Sigmoid colon (tissue), 7 donors: ENCODE measurements at regions of chr17 and their contacts with region 1.

Region 1: DNA sequence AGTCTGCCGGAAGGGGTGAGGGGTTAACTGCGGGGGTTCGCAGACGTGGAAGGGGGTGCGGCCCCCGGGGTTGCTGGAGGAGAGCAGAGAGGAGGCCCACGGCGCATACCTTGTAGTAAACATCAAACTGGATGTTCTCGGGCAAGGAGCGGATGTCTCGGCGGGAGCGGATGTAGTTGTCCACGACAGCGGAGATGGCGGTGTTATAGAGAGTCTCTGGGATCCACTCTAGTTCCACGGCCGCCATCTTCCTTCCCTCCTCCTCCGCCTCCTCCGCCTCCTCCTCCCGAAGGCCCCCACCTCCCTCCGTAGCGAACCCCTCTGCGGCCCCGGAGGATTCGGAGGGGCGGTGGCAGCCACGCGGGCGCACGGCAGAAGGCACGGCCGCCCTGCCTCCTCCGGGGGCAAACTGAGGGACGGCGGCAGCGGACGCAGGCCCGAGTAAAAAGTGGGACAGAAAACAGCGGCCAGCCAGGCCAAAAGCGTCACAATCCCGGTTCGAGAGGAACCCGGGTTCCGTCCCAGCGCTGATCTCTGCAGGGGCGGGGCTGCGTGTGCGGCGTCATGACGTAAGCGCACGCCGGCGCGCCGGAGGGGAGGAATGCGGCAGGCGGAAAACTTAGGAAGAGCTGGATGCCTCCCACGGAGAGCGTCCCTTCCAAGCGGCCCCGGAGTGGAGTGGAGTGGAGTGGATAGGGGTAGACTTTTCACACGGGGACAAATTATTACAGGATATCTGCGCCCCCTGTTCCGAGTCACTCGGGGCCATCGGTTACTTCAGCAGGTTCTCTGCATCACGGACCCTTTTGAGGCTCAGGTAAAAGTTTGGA is at the start of gene APPBP2:
- DNase-seq: peak; percentile 94
- H3K4me3 ChIP-seq: peak within 1 kb of the TSS; percentile 79 to 90 (median 82)
- H3K27ac ChIP-seq: peak within 1 kb of the TSS; percentile 98 to 99 (median 98)
- H3K4me1 ChIP-seq: peaks cover 0 to 45% (median 40%) of the 10 kb centered on the region in 4 donors
- H3K27me3 ChIP-seq: no peaks in the 10 kb centered on the region
- CTCF ChIP-seq: no peak
- EP300 ChIP-seq: no peak
- POLR2A ChIP-seq: peak; percentile 73 to 84
- total RNA-seq, gene APPBP2: 26.2 to 36.0 (median 33.8) TPM

Region 2: DNA sequence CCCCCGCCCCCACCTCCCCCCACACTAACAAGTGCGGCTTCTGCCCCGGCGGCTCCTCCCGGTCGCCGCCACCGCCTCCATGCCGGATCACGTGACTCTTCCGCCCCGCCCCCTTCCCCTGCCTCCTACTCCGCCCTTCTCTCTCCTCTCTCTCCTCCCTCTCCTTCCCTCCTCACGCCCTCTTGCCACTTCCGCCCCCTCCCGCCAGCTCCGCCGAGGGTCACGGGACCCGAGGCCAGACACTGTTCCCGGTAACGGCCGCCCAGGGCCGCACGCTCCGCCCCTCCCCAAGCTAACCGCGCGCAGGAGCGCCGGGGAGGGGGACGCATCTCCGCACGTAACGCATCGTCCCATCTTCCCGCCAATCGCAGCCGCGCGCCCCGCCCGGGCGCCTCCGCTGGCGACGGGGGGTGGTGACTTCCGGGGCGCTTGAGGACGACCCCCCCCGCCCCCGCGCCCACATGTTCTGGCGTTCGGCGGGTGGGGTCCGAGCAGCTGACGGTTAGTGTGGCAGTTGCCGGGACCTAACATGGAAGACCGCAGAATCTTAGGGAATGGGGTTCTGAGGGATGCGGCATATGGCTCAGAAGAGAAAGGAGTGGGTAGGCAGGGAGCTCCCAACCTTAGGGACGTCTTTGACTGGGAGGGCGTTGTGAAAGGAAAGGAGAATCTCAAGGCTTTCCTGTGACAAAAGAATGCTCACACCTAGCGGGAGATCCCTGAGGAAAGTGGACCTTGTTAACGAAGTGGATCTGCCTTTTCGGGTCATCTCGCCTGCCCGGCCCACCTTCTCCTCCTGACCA is 133.7 kb before region 1 on chr17 and contains the start of gene USP32:
- intact Hi-C with region 1: loop called (anchors 1 kb)
- DNase-seq: peak; percentile 99
- H3K4me3 ChIP-seq: peak within 1 kb of the TSS; percentile 72 to 93 (median 79)
- H3K27ac ChIP-seq: peak within 1 kb of the TSS; percentile 94 to 98 (median 95)
- H3K4me1 ChIP-seq: peaks cover 0 to 40% (median 34%) of the 10 kb centered on the region in 4 donors
- H3K27me3 ChIP-seq: no peaks in the 10 kb centered on the region
- CTCF ChIP-seq: peak in 2 of 4 experiments; percentile 15 to 18
- EP300 ChIP-seq: peak in 3 of 4 donors; percentile 36 to 91 (median 82)
- POLR2A ChIP-seq: peak; percentile 41 to 67
- total RNA-seq, gene USP32: 39.6 to 50.9 (median 44.1) TPM

Region 3: DNA sequence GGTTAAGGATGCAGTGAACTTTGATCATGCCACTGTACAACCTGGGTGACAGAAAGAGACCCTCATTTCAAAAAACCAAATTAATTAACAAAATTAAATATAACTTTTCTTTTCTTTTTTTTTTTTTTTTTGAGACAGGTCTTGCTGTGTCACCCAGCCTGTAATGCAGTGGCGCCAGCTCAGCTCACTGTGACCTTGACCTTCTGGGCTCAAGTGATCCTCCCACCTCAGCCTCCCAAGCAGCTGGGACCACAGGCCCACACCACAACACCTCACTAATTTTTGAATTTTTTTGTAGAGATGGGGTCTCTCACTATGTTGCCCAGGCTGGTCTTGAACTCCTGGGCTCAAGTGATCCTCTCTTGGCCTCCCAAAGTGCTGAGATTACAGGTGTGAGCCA is 42.7 kb after region 1 on chr17:
- intact Hi-C with region 1: loop called (anchors 2 kb)
- DNase-seq: no peak
- H3K4me3 ChIP-seq: no peak overlapping the region
- H3K27ac ChIP-seq: no peak overlapping the region
- H3K4me1 ChIP-seq: peaks cover 0 to 12% (median 7%) of the 10 kb centered on the region in 4 donors
- H3K27me3 ChIP-seq: no peaks in the 10 kb centered on the region
- CTCF ChIP-seq: no peak
- EP300 ChIP-seq: no peak
- POLR2A ChIP-seq: no peak

Region 4: GRCh38 chr17:60627124-60627523 is 101.2 kb after region 1 on chr17:
- intact Hi-C with region 1: no loop called
- DNase-seq: no peak
- H3K4me3 ChIP-seq: no peak overlapping the region
- H3K27ac ChIP-seq: no peak overlapping the region
- H3K4me1 ChIP-seq: peaks cover 0 to 4% (median 0%) of the 10 kb centered on the region in 4 donors
- H3K27me3 ChIP-seq: no peaks in the 10 kb centered on the region
- CTCF ChIP-seq: no peak
- EP300 ChIP-seq: no peak
- POLR2A ChIP-seq: no peak

Region 5: DNA sequence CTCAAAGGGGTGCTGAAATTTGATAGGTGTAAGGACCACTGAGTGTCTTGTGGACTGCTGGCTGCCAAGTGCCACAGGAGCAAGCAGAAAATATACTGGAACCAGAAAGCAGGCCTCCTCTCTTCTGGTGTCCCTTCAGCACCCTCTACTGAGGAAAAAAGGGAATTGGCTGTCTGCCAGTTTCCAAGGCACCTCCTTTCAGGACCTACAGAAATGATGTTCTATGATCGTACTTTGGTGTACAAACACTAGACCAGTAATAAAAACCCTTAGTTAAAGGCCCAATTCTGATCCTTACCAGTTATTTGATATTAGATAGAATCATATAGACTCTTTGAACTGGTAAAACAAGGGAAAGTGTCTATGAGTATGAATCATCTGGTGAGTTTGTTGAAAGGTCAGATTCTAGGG is 115.9 kb after region 1 on chr17:
- intact Hi-C with region 1: loop called (anchors 2 kb)
- DNase-seq: peak; percentile 78
- H3K4me3 ChIP-seq: no peak overlapping the region
- H3K27ac ChIP-seq: no peak overlapping the region
- H3K4me1 ChIP-seq: peaks cover 0 to 22% (median 9%) of the 10 kb centered on the region in 4 donors
- H3K27me3 ChIP-seq: no peaks in the 10 kb centered on the region
- CTCF ChIP-seq: peak in 3 of 4 experiments; percentile 24 to 44 (median 32)
- EP300 ChIP-seq: no peak
- POLR2A ChIP-seq: no peak

Region 6: GRCh38 chr17:60664022-60664421 is 138.1 kb after region 1 on chr17:
- intact Hi-C with region 1: no loop called
- DNase-seq: no peak
- H3K4me3 ChIP-seq: no peak overlapping the region
- H3K27ac ChIP-seq: no peak overlapping the region
- H3K4me1 ChIP-seq: no peaks in the 10 kb centered on the region
- H3K27me3 ChIP-seq: no peaks in the 10 kb centered on the region
- CTCF ChIP-seq: no peak
- EP300 ChIP-seq: no peak
- POLR2A ChIP-seq: no peak